Activated CD4-positive, alpha-beta memory T cell treated with anti-CD3 and anti-CD28 coated beads for 36 hours (primary cell): ENCODE measurements at regions of chr6 and their contacts with region 1.

Region 1: GRCh38 chr6:145734486-145735355 is 599 bp downstream of the EPM2A start:
- DNase-seq: peak; percentile 81
- H3K4me3 Mint-ChIP-seq: peak overlapping the region; percentile 89
- H3K27ac Mint-ChIP-seq: peak overlapping the region; percentile 95
- H3K4me1 Mint-ChIP-seq: peaks cover 22% of the 10 kb centered on the region
- H3K27me3 Mint-ChIP-seq: no peaks in the 10 kb centered on the region

Region 2: DNA sequence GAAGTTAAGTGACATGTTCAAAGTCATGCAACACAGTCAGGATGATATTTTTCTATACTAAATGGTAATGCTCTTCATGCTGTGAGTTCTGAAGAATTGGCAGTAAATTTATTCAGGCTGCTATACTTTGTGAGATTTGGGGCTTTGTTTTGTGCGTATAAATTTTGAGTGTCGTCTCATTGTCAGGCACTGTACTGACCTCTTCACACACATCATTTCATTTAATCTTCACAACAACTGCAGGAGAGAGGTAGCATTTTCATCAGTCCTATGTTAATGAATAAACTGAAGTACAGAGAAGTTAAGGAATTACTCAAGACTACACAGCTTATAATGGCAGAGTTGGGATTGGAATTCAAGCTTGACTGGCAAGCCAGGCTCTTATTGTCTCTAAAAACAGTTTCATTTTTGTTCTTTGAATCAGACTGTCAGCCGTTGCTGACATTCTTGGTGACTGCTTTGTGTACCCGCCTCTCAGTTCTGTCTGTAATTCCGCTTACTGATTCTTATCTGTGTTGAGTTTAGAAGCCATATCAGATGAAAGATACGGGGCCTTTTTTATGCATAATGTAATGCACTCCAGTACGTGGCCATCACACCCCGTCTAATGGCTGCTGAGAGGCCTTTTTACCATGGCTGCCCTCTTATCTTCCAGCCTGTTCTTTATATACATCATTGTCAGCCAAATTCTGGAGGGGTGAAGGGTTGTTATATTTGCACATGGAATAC is 1174.7 kb before region 1 on chr6:
- CTCF ChIA-PET with region 1: no interaction called
- POLR2A ChIA-PET with region 1: no interaction called
- intact Hi-C with region 1: loop called (anchors 10 kb)
- DNase-seq: peak; percentile 45
- H3K4me3 Mint-ChIP-seq: peak overlapping the region; percentile 56
- H3K27ac Mint-ChIP-seq: peak overlapping the region; percentile 82
- H3K4me1 Mint-ChIP-seq: peaks cover 34% of the 10 kb centered on the region
- H3K27me3 Mint-ChIP-seq: no peaks in the 10 kb centered on the region

Region 3: GRCh38 chr6:145372671-145373151 is 362.0 kb before region 1 on chr6:
- CTCF ChIA-PET with region 1: no interaction called
- POLR2A ChIA-PET with region 1: no interaction called
- intact Hi-C with region 1: loop called (anchors 10 kb)
- DNase-seq: peak; percentile 32
- H3K4me3 Mint-ChIP-seq: peak overlapping the region; percentile 43
- H3K27ac Mint-ChIP-seq: no peak overlapping the region
- H3K4me1 Mint-ChIP-seq: peaks cover 15% of the 10 kb centered on the region
- H3K27me3 Mint-ChIP-seq: no peaks in the 10 kb centered on the region

Region 4: GRCh38 chr6:145963216-145964068 is 228.7 kb after region 1 on chr6:
- CTCF ChIA-PET with region 1: no interaction called
- POLR2A ChIA-PET with region 1: interaction called, 6 read pairs
- intact Hi-C with region 1: loop called (anchors 1 kb)
- DNase-seq: peak; percentile 60
- H3K4me3 Mint-ChIP-seq: peak overlapping the region; percentile 94
- H3K27ac Mint-ChIP-seq: peak overlapping the region; percentile 85
- H3K4me1 Mint-ChIP-seq: peaks cover 50% of the 10 kb centered on the region
- H3K27me3 Mint-ChIP-seq: no peaks in the 10 kb centered on the region

Region 5: DNA sequence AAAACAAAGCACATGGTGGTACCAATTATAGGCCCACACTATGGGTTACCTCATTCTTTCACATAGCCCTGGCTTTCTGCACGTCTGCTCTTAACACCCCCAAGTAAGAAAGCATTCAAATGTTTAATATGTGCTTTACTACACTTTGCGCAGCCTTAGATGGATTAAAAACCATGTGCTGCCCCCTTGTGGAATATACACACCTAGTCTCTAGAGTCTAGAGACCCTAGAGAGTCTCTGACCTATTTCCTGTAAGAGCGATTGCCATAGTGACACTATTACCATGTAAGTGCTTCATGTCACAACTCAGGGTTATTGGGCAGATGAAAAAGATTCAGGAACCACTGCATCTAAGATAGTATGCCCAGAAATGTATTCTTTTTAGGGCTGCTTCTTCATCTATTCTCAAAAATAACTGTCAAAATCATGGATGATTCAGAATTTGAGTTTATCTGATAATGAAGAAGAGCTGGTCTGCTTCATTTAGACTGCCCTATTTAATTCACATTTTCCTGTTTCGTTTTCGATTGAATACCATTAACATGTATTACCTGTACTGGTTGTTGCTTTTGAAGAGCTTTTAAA is 1050.4 kb after region 1 on chr6:
- CTCF ChIA-PET with region 1: no interaction called
- POLR2A ChIA-PET with region 1: no interaction called
- intact Hi-C with region 1: loop called (anchors 10 kb)
- DNase-seq: peak; percentile 13
- H3K4me3 Mint-ChIP-seq: no peak overlapping the region
- H3K27ac Mint-ChIP-seq: no peak overlapping the region
- H3K4me1 Mint-ChIP-seq: peaks cover 9% of the 10 kb centered on the region
- H3K27me3 Mint-ChIP-seq: peaks cover 1% of the 10 kb centered on the region

Region 6: GRCh38 chr6:147202516-147203312 is 1468.0 kb after region 1 on chr6:
- CTCF ChIA-PET with region 1: no interaction called
- POLR2A ChIA-PET with region 1: no interaction called
- intact Hi-C with region 1: loop called (anchors 10 kb)
- DNase-seq: peak; percentile 87
- H3K4me3 Mint-ChIP-seq: peak overlapping the region; percentile 81
- H3K27ac Mint-ChIP-seq: peak overlapping the region; percentile 96
- H3K4me1 Mint-ChIP-seq: peaks cover 21% of the 10 kb centered on the region
- H3K27me3 Mint-ChIP-seq: no peaks in the 10 kb centered on the region